Activated CD4-positive, alpha-beta T cell treated with anti-CD3 and anti-CD28 coated beads, Interleukin-2, amount 10 ng/mL, durations not matched to agents 24 days and 14 days (primary cell): ENCODE measurements at regions of chr6 and their contacts with region 1.

Region 1: DNA sequence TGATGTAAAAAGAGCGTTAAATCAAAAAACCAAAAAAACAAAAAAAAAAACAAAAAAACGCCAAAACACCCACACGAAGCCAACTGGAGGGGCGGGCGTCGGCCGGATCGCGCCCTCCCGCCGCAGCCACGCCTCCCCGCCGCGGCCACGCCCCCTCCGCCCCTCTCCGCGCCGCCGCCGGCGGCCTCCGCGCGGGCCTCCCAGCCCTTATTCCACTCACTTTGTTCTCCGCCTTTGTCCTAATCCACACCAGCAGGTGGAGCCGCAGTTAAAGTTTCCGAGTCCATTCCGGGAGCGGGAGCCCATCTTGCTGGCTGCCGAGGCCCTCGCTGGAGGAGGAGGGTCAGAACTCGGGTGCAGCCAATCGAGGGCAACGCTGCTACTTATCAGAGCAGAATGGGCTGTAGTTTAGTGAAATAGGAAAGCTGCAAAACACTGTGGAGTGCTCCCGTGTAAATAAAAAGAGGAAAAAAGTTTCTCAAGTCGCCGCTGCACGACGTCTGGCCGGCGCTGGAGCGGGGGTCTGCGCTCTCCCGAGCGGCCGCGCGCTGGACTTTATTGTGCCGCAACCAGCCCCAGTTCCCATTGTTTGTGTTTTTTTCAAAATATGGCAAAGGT is at the start of gene ASF1A:
- DNase-seq: peak; percentile 99
- H3K4me3 Mint-ChIP-seq: peak within 1 kb of the TSS; percentile 90
- H3K27ac Mint-ChIP-seq: peak within 1 kb of the TSS; percentile 95
- H3K4me1 Mint-ChIP-seq: peaks cover 43% of the 10 kb centered on the region
- H3K27me3 Mint-ChIP-seq: no peaks in the 10 kb centered on the region
- total RNA-seq, gene ASF1A: 43.2 and 43.3 TPM in 2 replicates

Region 2: GRCh38 chr6:117674991-117675657 is 1218.8 kb before region 1 on chr6 and contains the start of gene NUS1:
- intact Hi-C with region 1: loop called (anchors 10 kb)
- DNase-seq: peak; percentile 99
- H3K4me3 Mint-ChIP-seq: peak within 1 kb of the TSS; percentile 89
- H3K27ac Mint-ChIP-seq: peak within 1 kb of the TSS; percentile 93
- H3K4me1 Mint-ChIP-seq: peaks cover 45% of the 10 kb centered on the region
- H3K27me3 Mint-ChIP-seq: no peaks in the 10 kb centered on the region
- total RNA-seq, gene NUS1: 49.6 and 49.7 TPM in 2 replicates

Region 3: DNA sequence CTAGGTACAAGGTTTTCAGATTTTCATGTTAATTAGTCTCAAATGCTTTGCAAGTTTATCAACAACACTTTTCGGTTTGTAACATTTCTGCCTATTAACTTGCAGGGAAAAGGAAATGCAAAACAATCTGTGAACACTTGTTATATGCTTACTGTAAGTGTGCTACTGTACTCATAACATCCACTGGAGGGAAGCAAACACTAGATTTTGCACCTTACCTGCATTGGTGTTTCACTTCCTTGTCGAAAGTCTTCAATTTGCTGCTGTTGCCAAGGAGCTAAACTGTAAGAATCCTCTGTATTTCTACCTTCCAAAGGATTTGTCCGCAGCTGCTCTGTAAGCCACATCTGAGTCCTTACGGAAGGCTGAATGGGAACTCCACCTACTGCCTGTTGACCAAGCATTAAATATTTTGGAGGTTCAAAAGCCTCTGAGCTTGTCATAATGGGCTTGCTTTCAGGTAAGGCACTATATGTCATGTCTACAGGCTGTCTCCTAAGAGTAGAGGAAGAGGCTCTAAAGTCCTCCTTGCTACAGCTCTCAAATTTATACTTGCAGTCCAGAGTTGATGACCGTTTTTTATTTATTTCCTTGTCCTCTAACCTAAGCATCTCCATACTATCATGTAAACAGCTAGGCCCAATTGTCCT is 328.5 kb before region 1 on chr6:
- intact Hi-C with region 1: loop called (anchors 5 kb)
- DNase-seq: peak; percentile 80
- H3K4me3 Mint-ChIP-seq: no peak overlapping the region
- H3K27ac Mint-ChIP-seq: no peak overlapping the region
- H3K4me1 Mint-ChIP-seq: peaks cover 13% of the 10 kb centered on the region
- H3K27me3 Mint-ChIP-seq: no peaks in the 10 kb centered on the region

Region 4: GRCh38 chr6:118709859-118710350 is 184.0 kb before region 1 on chr6:
- intact Hi-C with region 1: loop called (anchors 1 kb)
- DNase-seq: peak; percentile 93
- H3K4me3 Mint-ChIP-seq: peak overlapping the region; percentile 90
- H3K27ac Mint-ChIP-seq: peak overlapping the region; percentile 92
- H3K4me1 Mint-ChIP-seq: peaks cover 65% of the 10 kb centered on the region
- H3K27me3 Mint-ChIP-seq: no peaks in the 10 kb centered on the region

Region 5: GRCh38 chr6:118843685-118844390 is 50.1 kb before region 1 on chr6:
- intact Hi-C with region 1: loop called (anchors 1 kb)
- DNase-seq: peak; percentile 73
- H3K4me3 Mint-ChIP-seq: peak overlapping the region; percentile 59
- H3K27ac Mint-ChIP-seq: peak overlapping the region; percentile 72
- H3K4me1 Mint-ChIP-seq: peaks cover 22% of the 10 kb centered on the region
- H3K27me3 Mint-ChIP-seq: no peaks in the 10 kb centered on the region

Region 6: DNA sequence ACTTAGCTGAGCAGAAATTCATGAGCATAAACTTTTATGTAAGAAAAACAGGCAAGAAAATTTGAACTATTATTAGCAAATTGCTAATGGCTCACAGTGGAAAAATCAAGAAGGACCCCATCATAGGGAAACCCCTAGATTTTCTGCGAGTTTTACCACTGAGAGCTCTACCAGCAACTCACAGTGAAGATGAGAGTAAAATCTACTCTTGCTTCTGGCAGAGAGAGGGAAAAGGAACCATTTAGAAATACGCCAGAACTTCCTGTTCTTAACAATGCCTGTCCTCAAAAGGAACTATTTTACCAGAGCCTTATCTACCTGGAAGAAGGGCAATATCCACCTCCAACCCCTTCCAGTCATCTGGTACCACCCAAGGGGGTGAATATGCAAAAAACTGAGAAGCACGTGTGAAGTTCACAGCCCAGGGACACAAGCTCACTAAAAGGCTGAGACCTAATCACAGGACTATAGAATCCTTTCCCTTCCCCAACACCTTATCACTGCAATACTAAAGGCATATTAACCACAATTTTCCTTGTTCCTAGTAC is 34.3 kb before region 1 on chr6:
- intact Hi-C with region 1: no loop called
- DNase-seq: no peak
- H3K4me3 Mint-ChIP-seq: no peak overlapping the region
- H3K27ac Mint-ChIP-seq: no peak overlapping the region
- H3K4me1 Mint-ChIP-seq: peaks cover 10% of the 10 kb centered on the region
- H3K27me3 Mint-ChIP-seq: no peaks in the 10 kb centered on the region

Region 7: DNA sequence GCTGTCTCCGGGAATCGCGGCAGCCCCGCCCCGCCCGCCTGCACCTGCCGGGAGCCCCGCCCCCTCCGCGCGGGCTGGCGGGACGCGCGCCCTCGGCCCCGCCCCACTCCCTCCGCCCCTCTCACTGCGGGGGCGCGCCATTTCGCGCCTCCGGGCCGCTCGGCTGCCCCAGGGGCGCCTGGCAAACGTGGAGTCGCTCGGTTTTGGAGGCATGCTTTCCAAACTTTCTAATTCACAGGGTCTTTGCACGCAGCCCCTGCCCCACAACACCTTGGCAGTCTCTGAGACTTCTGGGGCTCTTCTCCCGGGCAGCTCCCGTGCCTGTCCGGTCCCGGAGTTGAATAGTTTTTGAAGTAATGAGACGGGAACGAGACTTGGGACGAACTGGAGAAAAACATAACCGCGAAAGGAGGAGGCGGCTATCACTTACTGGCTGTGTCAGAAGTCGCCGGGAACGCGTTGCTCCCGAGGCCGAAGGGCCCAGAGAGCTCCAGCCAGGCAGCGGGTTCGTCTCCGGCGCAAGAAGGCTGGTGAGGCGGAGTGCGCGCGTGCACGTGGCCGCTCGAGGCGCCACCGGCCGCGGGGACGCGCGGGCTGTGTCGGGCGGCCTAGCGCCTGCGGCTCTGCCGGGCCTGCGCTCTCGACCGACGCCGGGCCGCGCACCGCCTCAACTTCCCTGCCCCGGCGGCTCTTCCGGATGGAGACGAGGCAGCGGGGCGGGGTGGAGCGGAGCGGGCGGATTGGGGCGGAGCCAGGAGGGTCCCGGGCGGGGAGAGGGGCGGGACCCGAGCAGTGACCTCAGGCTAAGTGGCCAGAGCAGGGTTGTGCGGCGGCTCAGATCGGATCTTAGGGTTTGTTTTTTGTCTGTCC is 40.8 kb after region 1 on chr6 and contains the start of gene MCM9:
- intact Hi-C with region 1: loop called (anchors 1 kb)
- DNase-seq: peak; percentile 97
- H3K4me3 Mint-ChIP-seq: peak within 1 kb of the TSS; percentile 91
- H3K27ac Mint-ChIP-seq: peak within 1 kb of the TSS; percentile 97
- H3K4me1 Mint-ChIP-seq: peaks cover 19% of the 10 kb centered on the region
- H3K27me3 Mint-ChIP-seq: no peaks in the 10 kb centered on the region
- total RNA-seq, gene MCM9: 19.0 and 21.3 TPM in 2 replicates

Region 8: DNA sequence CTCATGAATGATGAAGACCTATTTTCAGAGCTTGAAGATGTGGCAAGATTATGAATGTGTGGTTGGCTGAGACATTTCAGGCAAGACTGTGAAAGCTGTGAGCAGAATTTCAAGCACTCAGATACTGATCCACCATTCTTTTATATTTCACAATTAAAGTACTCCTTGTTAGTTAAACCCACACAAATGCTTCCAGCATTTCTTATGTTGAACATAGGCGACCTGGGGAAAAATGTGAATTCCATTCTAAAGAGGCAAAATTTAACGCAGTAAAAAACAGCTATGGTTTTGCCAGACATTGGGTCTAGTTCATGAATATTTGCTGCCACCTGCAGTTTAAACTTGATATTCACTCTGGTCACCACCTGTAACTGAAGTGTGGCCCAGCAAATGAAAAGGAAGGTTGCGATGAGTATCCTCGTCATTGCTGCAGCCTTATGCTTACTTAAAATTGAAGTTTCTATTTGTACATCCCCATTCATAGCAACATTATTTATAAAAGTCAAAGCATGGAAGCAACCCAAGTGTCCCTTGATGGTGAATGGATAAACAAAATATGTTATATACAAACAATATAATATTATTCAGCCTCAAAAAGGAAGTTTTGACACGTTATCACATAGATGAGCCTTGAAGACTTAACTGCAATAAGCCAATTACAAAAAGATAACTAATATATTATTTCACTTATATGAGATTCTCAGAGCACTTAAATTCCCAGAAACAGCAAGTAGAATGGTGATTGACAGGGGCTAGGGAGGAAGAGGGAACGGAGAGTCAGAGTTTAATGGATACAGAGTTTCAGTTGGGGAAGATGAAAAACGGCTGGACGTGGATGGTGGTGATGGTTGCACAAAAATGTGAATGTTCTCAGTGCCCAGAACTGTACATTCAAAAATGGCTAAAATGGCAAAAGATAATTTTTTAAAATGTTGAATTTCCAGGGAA is 217.0 kb after region 1 on chr6:
- intact Hi-C with region 1: loop called (anchors 2 kb)
- DNase-seq: peak; percentile 89
- H3K4me3 Mint-ChIP-seq: no peak overlapping the region
- H3K27ac Mint-ChIP-seq: no peak overlapping the region
- H3K4me1 Mint-ChIP-seq: peaks cover 12% of the 10 kb centered on the region
- H3K27me3 Mint-ChIP-seq: no peaks in the 10 kb centered on the region